KBM-7 (cell line): ENCODE measurements at regions of chr12 and their contacts with region 1.

Region 1: GRCh38 chr12:32671930-32672780 is 6.9 kb upstream of the DNM1L start:
- DNase-seq: peak; percentile 78

Region 2: GRCh38 chr12:32365473-32366064 is 306.6 kb before region 1 on chr12:
- in situ Hi-C with region 1: loop called (anchors 25 kb)
- DNase-seq: peak; percentile 77

Region 3: DNA sequence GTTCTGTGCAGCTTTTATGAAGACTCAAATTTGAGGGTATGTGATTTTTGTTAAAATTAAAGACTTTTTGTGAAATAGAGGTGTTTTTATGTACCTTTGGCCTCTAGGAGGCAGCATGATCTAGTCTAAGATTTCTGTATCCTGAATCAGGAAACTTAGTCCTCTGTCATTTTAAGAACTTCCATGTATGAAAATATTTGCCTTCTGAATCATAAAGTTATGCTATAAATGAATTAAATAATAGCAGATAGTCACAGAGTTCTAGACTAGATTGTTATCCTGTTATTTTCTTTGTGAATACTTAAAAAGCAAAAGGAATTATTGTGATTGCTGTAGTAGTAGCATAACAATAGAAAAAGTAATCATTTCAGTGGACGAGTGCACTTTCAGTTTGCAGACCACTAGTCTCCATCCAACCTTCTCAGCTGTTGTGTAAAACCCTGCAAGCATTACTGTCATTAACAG is 216.5 kb before region 1 on chr12:
- in situ Hi-C with region 1: loop called (anchors 25 kb)
- DNase-seq: peak; percentile 79